ENCODE measurements at regions of chr2 and their contacts with region 1.

Region 1: DNA sequence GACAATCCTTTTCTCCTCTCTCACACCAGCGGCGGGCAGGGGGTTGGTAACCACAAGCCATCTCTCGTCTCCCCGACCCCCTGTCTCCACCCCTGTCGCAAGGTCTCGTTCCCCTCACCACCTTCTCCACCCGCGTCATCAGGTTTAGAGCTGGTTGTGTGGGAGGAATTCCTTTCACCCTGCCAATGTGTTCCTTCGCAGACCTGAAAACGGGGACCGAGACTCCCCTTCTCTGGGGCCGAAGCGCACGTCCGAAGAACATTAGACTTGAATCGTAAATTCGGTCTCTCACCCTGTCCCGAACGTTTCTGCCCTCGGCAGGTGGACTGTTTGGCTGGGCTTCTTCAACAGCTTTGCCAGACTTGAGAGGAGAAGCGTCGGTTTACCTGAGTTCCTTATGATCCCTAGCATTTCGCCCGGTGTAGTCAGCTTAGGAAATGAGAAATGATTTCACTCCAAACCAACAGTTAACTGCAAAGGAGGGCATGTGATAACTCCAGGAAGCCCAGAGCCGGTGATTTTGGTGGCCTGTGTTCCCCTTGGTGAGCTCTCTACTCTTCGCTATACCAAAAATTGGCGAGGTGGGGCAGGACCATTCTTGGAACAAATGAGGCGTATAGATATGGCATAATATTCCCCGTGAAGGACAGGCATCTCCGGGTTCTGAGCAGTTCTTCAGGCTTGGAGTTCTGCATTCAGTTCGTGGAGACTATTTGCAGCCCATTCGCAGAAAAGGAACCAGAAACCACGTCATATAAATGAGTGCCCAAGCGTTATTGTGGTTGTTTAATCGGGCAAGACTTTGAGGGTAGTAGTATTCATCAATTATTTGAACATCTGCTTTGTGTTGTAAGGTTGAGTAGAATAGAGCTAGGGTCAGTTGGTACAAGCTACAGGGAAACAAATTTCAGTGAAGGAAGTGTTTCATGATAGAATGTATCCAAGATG is 694 bp downstream of the CFAP36 start:
- DNase-seq: peak; percentile 37

Region 2: GRCh38 chr2:55419679-55420438 is 100.4 kb before region 1 on chr2 and contains the start of gene CCDC88A:
- CTCF ChIA-PET with region 1: no interaction called
- POLR2A ChIA-PET with region 1: interaction called, 15 read pairs
- DNase-seq: peak; percentile 89

Region 3: DNA sequence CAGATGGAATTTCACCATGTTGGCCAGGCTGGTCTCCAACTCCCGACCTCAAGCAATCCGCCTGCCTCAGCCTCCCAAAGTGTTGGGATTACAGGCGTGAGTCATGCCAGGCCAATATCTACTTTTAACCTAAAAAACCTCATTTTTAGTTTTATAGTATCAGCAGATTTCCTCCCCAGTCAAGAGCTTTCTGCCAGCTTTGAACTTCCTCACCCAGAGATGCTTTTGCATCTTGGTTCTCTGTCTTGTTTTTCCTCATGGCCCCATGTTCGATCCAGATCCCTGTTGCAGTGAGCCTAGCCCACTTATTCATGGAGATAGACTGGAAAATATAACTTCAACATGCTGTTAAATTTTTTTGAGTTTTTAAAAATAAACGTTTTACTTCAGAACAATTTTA is 33.8 kb before region 1 on chr2:
- CTCF ChIA-PET with region 1: no interaction called
- POLR2A ChIA-PET with region 1: interaction called, 12 read pairs
- DNase-seq: no peak

Region 4: GRCh38 chr2:55617175-55618024 is 97.2 kb after region 1 on chr2 and contains the start of gene PPP4R3B:
- CTCF ChIA-PET with region 1: no interaction called
- POLR2A ChIA-PET with region 1: interaction called, 13 read pairs
- DNase-seq: peak; percentile 91